B cell (primary cell): ENCODE measurements at regions of chr7 and their contacts with region 1.

Region 1: GRCh38 chr7:24665564-24666294 is 91.5 kb downstream of the GSDME start:
- DNase-seq: peak; percentile 68
- ATAC-seq: peak; percentile 39
- H3K4me3 ChIP-seq: no peak overlapping the region
- H3K4me3 Mint-ChIP-seq: no peak overlapping the region
- H3K27ac ChIP-seq: no peak overlapping the region
- H3K27ac Mint-ChIP-seq: no peak overlapping the region
- H3K4me1 ChIP-seq: no peaks in the 10 kb centered on the region
- H3K4me1 Mint-ChIP-seq: no peaks in the 10 kb centered on the region
- H3K27me3 ChIP-seq: no peaks in the 10 kb centered on the region
- H3K27me3 Mint-ChIP-seq: no peaks in the 10 kb centered on the region
- CTCF ChIP-seq: peak; percentile 94

Region 2: GRCh38 chr7:23273141-23273599 is 1392.6 kb before region 1 on chr7:
- CTCF ChIA-PET with region 1: no interaction called
- POLR2A ChIA-PET with region 1: no interaction called
- intact Hi-C with region 1: loop called (anchors 10 kb)
- DNase-seq: peak; percentile 88
- ATAC-seq: peak; percentile 96
- H3K4me3 ChIP-seq: peak overlapping the region in 2 of 5 experiments; percentile 9 to 27
- H3K4me3 Mint-ChIP-seq: peak overlapping the region; percentile 72
- H3K27ac ChIP-seq: no peak overlapping the region
- H3K27ac Mint-ChIP-seq: peak overlapping the region; percentile 39
- H3K4me1 ChIP-seq: peaks cover 3 to 9% of the 10 kb centered on the region in 2 donors
- H3K4me1 Mint-ChIP-seq: peaks cover 4% of the 10 kb centered on the region
- H3K27me3 ChIP-seq: peaks cover 0 to 6% (median 0%) of the 10 kb centered on the region in 4 experiments
- H3K27me3 Mint-ChIP-seq: peaks cover 9% of the 10 kb centered on the region
- CTCF ChIP-seq: peak; percentile 90

Region 3: GRCh38 chr7:23570592-23571200 is 1095.0 kb before region 1 on chr7:
- CTCF ChIA-PET with region 1: interaction called, 21 read pairs
- POLR2A ChIA-PET with region 1: no interaction called
- intact Hi-C with region 1: loop called (anchors 1 kb)
- DNase-seq: peak; percentile 77
- ATAC-seq: peak; percentile 91
- H3K4me3 ChIP-seq: no peak overlapping the region
- H3K4me3 Mint-ChIP-seq: peak overlapping the region; percentile 57
- H3K27ac ChIP-seq: no peak overlapping the region
- H3K27ac Mint-ChIP-seq: no peak overlapping the region
- H3K4me1 ChIP-seq: no peaks in the 10 kb centered on the region
- H3K4me1 Mint-ChIP-seq: peaks cover 3% of the 10 kb centered on the region
- H3K27me3 ChIP-seq: peaks cover 0 to 4% (median 0%) of the 10 kb centered on the region in 4 experiments
- H3K27me3 Mint-ChIP-seq: peaks cover 10% of the 10 kb centered on the region
- CTCF ChIP-seq: peak; percentile 84

Region 4: GRCh38 chr7:24290004-24290641 is 375.6 kb before region 1 on chr7:
- CTCF ChIA-PET with region 1: interaction called, 21 read pairs
- POLR2A ChIA-PET with region 1: no interaction called
- intact Hi-C with region 1: no loop called
- DNase-seq: peak; percentile 64
- ATAC-seq: peak; percentile 86
- H3K4me3 ChIP-seq: no peak overlapping the region
- H3K4me3 Mint-ChIP-seq: no peak overlapping the region
- H3K27ac ChIP-seq: no peak overlapping the region
- H3K27ac Mint-ChIP-seq: no peak overlapping the region
- H3K4me1 ChIP-seq: peaks cover 8 to 10% of the 10 kb centered on the region in 2 donors
- H3K4me1 Mint-ChIP-seq: peaks cover 12% of the 10 kb centered on the region
- H3K27me3 ChIP-seq: peaks cover 0 to 19% (median 12%) of the 10 kb centered on the region in 4 experiments
- H3K27me3 Mint-ChIP-seq: peaks cover 40% of the 10 kb centered on the region
- CTCF ChIP-seq: peak; percentile 41

Region 5: DNA sequence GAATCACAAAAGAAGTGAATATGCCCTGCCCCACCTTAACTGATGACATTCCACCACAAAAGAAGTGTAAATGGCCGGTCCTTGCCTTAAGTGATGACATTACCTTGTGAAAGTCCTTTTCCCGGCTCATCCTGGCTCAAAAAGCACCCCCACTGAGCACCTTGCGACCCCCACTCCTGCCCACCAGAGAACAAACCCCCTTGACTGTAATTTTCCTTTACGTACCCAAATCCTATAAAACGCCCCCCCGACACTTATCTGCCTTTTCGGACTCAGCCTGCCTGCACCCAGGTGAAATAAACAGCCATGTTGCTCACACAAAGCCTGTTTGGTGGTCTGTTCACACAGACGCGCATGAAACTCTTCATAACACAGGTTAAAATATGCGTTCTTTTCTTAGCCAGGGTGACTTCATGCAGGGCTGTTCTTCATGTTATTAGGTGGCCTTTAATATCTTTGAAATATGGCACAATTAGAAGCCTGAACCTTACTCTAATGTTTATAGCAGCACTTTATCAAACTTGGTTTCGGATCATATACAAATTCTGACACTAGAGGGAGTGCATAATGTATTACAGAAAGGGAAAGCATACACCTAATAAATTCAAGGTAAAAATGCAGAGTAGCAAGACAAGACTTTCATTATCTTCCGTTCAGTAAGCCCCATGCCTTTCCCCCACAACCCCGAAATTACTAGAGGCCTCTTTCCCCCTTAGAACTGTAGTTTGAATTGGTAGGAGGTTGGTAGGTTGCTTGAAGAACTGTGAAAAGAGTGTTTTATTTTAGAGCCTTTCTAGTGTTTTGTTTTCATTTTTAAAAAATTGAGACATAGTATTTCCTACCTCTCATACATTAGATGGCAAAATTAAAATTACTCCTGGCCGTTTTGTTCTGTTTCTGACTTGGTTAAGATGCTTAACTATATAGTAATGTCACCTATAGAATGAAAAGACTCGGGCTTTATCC is 263.8 kb before region 1 on chr7:
- CTCF ChIA-PET with region 1: interaction called, 6 read pairs
- POLR2A ChIA-PET with region 1: no interaction called
- intact Hi-C with region 1: loop called (anchors 1 kb)
- DNase-seq: peak; percentile 32
- ATAC-seq: no peak
- H3K4me3 ChIP-seq: no peak overlapping the region
- H3K4me3 Mint-ChIP-seq: no peak overlapping the region
- H3K27ac ChIP-seq: no peak overlapping the region
- H3K27ac Mint-ChIP-seq: no peak overlapping the region
- H3K4me1 ChIP-seq: peaks cover 5 to 6% of the 10 kb centered on the region in 2 donors
- H3K4me1 Mint-ChIP-seq: peaks cover 11% of the 10 kb centered on the region
- H3K27me3 ChIP-seq: no peaks in the 10 kb centered on the region
- H3K27me3 Mint-ChIP-seq: peaks cover 5% of the 10 kb centered on the region
- CTCF ChIP-seq: peak; percentile 43

Region 6: GRCh38 chr7:24587848-24588247 is 77.9 kb before region 1 on chr7:
- CTCF ChIA-PET with region 1: interaction called, 6 read pairs
- POLR2A ChIA-PET with region 1: no interaction called
- intact Hi-C with region 1: loop called (anchors 5 kb)
- DNase-seq: peak; percentile 69
- ATAC-seq: peak; percentile 67
- H3K4me3 ChIP-seq: no peak overlapping the region
- H3K4me3 Mint-ChIP-seq: no peak overlapping the region
- H3K27ac ChIP-seq: no peak overlapping the region
- H3K27ac Mint-ChIP-seq: no peak overlapping the region
- H3K4me1 ChIP-seq: no peaks in the 10 kb centered on the region
- H3K4me1 Mint-ChIP-seq: peaks cover 26% of the 10 kb centered on the region
- H3K27me3 ChIP-seq: no peaks in the 10 kb centered on the region
- H3K27me3 Mint-ChIP-seq: no peaks in the 10 kb centered on the region
- CTCF ChIP-seq: peak; percentile 79